ENCODE measurements at regions of chr7 and their contacts with region 1.

Region 1: DNA sequence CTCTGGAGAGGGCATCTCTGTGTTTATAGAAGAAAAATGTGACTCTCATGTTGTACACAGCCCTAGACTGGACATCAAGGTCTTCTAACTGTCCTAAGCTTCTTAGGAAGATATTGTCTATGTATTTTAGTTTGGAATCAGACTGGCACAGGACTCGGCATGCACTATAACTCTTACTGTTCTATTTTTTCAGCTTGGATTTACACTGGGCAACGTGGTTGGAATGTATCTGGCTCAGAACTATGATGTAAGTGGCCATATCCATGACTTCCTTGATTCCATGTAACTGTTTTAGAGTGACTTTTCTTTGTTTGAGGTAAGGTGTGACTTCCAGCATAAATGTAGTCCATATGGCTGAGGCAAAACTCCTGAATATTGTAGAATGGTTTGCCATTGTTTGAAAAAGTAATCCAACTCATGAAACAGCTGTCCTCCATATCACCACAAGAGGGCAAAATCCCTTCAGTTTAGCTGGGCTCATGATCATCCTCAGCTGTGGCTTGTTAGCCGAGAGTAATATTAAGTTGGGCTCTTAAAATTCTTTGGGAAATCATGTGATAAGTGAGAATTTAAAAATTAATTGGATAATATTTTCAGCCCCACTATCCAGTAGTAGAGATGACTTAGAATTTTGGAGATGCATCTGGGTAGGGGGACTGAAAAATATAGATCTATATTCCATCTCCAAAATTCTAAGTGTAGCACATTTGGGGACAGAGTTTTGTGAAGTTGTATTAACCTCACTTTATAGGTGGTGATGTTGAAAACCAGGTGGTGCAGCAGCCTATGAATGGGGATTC is 10.4 kb downstream of the STMP1 start:
- DNase-seq: peak; percentile 31
- H3K4me3 ChIP-seq: no peak overlapping the region
- CTCF ChIP-seq: peak; percentile 74

Region 2: DNA sequence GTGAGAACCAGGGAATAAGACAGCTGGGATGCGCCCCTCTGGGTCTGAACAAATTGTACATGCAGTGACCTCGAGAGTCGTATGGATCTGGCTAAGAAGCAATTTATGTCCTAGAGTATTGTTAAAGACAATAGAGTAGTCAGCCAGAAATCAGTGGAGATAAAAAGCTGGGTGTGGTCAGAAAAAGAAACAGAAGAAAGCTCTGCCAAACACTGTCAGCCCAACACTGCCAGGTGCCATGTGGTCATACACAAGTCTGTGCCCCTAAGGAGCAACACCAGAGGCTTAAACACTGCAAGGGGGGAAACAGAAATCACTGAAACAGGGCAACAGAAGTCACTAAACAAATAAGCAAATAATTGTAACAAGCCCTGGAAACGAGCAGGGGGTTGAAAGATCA is 225.0 kb before region 1 on chr7:
- CTCF ChIA-PET with region 1: no interaction called
- POLR2A ChIA-PET with region 1: no interaction called
- DNase-seq: no peak
- H3K4me3 ChIP-seq: no peak overlapping the region
- CTCF ChIP-seq: no peak

Region 3: DNA sequence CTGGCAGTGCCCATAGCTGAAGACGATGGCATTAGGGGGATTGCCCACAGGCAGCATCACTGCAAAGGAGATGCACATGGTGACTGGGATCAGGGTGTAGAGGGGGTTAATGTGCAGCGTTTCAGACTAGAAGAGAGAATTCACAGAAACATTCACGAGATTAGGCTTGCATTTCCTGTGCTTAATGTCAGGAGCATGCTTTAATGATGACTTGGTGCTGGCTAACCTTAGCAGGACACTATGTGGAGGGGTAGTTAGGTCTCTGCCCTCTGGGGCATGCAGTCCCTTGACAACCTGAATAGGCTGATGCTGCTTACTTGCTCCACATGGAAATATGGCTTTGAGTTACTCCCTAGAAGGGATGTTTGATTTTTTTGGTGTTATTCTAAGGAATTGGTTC is 11.4 kb after region 1 on chr7:
- CTCF ChIA-PET with region 1: interaction called, 87 read pairs
- POLR2A ChIA-PET with region 1: interaction called, 5 read pairs
- DNase-seq: no peak
- H3K4me3 ChIP-seq: no peak overlapping the region
- CTCF ChIP-seq: no peak

Region 4: DNA sequence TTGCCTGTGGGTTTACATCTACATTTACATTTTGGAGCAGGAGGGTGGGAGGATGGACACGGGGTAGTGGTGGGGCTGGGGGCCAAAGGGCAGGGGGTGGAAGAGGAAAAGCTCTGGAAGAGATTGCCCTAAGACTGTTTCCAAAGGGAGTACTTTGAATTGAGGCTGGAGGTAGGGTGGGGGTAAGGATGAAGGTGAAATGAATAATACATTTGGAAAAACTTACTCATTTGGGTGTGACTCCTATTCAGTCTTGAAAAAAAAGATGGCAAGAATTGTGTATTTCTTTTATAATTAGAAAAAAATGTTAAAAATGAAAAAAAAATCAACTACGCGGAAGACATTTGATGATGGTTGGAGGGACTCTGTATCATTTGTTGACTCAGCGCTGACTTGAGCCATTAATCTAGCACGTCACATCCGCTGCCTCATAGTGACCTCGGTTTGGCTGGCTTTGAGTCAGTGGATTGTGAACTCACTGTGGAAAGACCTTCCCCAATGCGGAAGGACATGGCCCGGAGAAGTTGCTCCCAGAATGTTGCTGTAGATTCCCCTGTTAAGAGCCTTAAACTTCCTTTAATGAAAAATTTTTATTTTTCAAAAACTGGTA is 73.0 kb after region 1 on chr7:
- CTCF ChIA-PET with region 1: interaction called, 10 read pairs
- POLR2A ChIA-PET with region 1: no interaction called
- DNase-seq: peak; percentile 91
- H3K4me3 ChIP-seq: no peak overlapping the region
- CTCF ChIP-seq: no peak

Region 5: DNA sequence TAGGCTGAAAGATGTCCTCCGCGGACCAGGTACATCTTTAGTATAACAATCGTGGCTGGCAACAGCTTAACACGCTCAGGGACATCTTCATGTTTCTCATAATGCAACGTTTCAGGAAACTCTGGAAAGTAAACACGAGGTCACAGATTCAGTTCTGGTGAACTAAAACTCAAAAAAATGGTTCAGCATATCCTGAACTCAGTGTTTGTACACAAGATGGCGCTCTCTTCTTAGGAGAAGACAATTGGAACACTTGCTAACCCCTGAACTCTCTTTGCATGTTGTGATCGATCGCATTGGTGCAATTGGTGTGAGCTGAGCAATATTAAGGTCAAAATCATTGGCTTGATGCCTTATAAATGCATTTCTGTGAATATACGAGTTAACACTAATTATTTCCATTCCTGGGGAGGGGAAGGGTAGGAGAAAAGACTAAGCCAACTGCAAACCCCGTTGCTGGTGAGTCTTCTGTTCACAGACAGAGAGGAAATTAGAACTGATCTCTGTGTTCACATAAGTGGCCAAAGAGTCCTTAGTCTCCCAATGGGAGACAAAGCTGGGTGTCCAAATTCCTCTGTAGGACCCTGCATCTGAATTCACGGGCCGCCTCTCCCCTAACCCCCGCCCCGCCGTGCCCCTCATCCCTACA is 128.4 kb after region 1 on chr7:
- CTCF ChIA-PET with region 1: interaction called, 199 read pairs
- POLR2A ChIA-PET with region 1: no interaction called
- DNase-seq: peak; percentile 5
- H3K4me3 ChIP-seq: no peak overlapping the region
- CTCF ChIP-seq: peak; percentile 68

Region 6: DNA sequence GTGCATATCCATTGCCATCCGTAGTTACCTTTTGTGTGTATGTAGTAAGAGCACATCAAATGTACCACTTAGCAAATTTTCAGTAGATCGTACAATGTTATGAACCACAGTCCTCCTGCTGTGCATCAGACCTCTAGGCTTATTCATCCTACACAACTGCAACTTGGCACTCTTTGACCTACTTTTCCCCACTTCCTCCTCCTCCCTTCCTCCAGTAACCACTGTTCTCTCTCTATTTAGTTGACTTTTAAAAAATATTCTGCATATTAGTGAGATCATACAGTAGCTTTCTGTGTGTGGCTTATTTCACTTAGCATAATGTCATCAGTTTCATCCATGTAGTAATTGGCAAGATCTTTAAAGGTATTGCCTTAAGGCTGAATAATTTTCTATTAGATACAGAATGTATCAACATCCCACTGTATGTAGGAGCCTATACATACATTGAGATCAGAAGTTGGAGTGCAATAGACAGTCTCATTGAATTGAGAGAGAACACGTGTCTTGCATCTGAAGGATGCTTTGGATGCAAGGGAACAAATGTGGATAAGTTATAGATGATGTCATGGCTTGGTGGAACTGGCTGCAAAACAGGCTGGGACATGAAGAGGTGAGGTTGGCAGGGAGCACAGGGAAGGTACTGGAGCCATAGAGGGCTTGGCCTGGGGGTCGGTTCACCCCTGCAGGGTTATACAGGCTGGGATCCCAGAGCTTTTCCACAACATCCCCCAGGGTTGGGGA is 158.9 kb after region 1 on chr7:
- CTCF ChIA-PET with region 1: no interaction called
- POLR2A ChIA-PET with region 1: no interaction called
- DNase-seq: no peak
- H3K4me3 ChIP-seq: no peak overlapping the region
- CTCF ChIP-seq: no peak